ENCODE measurements at regions of chr15 and their contacts with region 1.

Region 1: GRCh38 chr15:68053701-68054627 is at the start of gene PIAS1:
- ATAC-seq: peak; percentile 83 to 88 (median 85)
- H3K4me3 ChIP-seq: peak within 1 kb of the TSS; percentile 81 to 98 (median 93)
- H3K27ac ChIP-seq: peak within 1 kb of the TSS; percentile 85 to 96
- H3K4me1 ChIP-seq: peaks cover 5 to 20% of the 10 kb centered on the region in 2 donors
- total RNA-seq, gene PIAS1: 20.5 to 47.4 (median 31.3) TPM

Region 2: GRCh38 chr15:67776600-67776999 is 277.4 kb before region 1 on chr15:
- in situ Hi-C with region 1: no loop called
- ATAC-seq: no peak
- H3K4me3 ChIP-seq: no peak overlapping the region
- H3K27ac ChIP-seq: no peak overlapping the region
- H3K4me1 ChIP-seq: peaks cover 2 to 9% of the 10 kb centered on the region in 2 donors

Region 3: GRCh38 chr15:68154923-68155559 is 101.1 kb after region 1 on chr15:
- in situ Hi-C with region 1: loop called in 1 of 9 experiments (anchors 25 kb)
- ATAC-seq: peak in 4 of 8 experiments; percentile 30 to 61 (median 42)
- H3K4me3 ChIP-seq: no peak overlapping the region
- H3K27ac ChIP-seq: no peak overlapping the region
- H3K4me1 ChIP-seq: no peaks in the 10 kb centered on the region